ENCODE measurements at regions of chr20 and their contacts with region 1.

Region 1: GRCh38 chr20:50987592-50988210 is 29.1 kb downstream of the MOCS3 start:
- DNase-seq: no peak

Region 2: GRCh38 chr20:51595058-51595532 is 607.4 kb after region 1 on chr20:
- intact Hi-C with region 1: loop called (anchors 10 kb)
- DNase-seq: peak; percentile 92

Measured in cardiac septum (tissue), 1 donor.